SK-N-SH (cell line): ENCODE measurements at regions of chr17 and their contacts with region 1.

Region 1: DNA sequence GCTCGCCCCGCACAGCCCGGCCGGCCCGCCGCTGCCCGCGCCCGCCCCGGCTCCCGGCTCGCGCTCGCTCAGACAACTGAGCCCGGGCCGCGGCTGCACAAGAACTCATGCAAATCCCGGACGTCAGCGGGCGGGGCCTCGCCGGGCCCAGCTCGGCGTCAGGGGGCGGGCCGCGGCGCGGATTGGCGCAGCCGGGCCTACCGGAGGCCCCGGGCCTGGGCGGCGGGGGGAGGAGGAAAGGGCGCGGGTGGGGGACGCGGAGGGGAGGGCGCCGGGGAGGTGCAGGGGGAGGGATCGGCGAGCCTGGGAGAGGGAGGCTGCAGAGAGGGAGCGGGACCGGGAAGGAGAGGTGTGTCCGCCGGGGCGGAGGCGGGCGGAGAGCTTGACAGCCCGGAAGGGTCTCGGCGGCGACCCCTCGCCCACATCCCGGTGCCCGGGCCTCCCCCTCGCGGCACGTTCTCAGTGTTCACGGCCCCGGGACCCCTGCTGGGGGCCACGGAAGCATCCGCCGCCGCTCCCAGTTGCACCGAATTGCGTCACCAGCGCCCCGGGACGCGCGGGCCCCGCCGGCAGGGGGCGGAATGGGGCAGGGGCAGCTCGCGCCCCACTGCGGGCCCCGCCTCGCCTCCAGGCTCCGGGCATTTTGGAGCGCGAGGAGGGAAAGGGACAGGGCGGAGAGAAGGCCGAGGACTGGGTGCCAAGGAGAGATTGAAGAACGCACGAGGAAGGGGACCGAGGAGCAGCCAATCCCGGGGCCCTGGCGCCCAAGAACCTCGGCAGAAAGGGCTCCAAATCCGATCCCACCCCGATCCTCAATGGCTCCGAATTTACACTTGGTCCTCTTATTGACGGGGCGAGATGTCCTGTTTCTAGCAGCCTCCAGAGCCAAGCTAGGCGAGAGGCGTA is at the start of gene CBX4:
- DNase-seq: peak; percentile 99
- H3K4me3 ChIP-seq: peak within 1 kb of the TSS; percentile 54 to 91
- H3K27ac ChIP-seq: peak within 1 kb of the TSS; percentile 74 to 77
- H3K4me1 ChIP-seq: peaks cover 26 to 63% of the 10 kb centered on the region in 2 experiments
- H3K27me3 ChIP-seq: peaks cover 39% of the 10 kb centered on the region
- CTCF ChIP-seq: peak; percentile 86
- EP300 ChIP-seq: no peak
- RAD21 ChIP-seq: no peak
- polyA plus RNA-seq, gene CBX4: 16.6 and 21.9 TPM in 2 replicates

Region 2: GRCh38 chr17:79741751-79742588 is 97.6 kb before region 1 on chr17:
- CTCF ChIA-PET with region 1: interaction called, 174 read pairs
- POLR2A ChIA-PET with region 1: interaction called, 3 read pairs
- DNase-seq: peak; percentile 99
- H3K4me3 ChIP-seq: peak overlapping the region; percentile 50 to 55; a peak in 3 of 4 replicates
- H3K27ac ChIP-seq: peak overlapping the region in 1 of 2 experiments; percentile 29; a peak in 1 of 4 replicates
- H3K4me1 ChIP-seq: peaks cover 0 to 12% of the 10 kb centered on the region in 2 experiments; a peak in 1 of 4 replicates
- H3K27me3 ChIP-seq: peaks cover 42% of the 10 kb centered on the region
- CTCF ChIP-seq: peak; percentile 99
- EP300 ChIP-seq: no peak
- RAD21 ChIP-seq: peak; percentile 75

Region 3: GRCh38 chr17:79796763-79797491 is 42.7 kb before region 1 on chr17 and contains the start of gene CBX8:
- CTCF ChIA-PET with region 1: interaction called, 22 read pairs
- POLR2A ChIA-PET with region 1: interaction called, 9 read pairs
- DNase-seq: peak; percentile 100
- H3K4me3 ChIP-seq: peak within 1 kb of the TSS; percentile 79 to 85
- H3K27ac ChIP-seq: peak within 1 kb of the TSS; percentile 82 to 98; a peak in 3 of 4 replicates
- H3K4me1 ChIP-seq: peaks cover 23 to 43% of the 10 kb centered on the region in 2 experiments; a peak in 3 of 4 replicates
- H3K27me3 ChIP-seq: 0 out of 2 replicates have a peak, but pooled peaks cover 3% of the 10 kb centered on the region
- CTCF ChIP-seq: no peak
- EP300 ChIP-seq: peak; percentile 36 to 63; a peak in 2 of 4 replicates
- RAD21 ChIP-seq: no peak; the same call in 1 of the 2 replicates
- polyA plus RNA-seq, gene CBX8: 2.1 and 2.9 TPM in 2 replicates

Region 4: DNA sequence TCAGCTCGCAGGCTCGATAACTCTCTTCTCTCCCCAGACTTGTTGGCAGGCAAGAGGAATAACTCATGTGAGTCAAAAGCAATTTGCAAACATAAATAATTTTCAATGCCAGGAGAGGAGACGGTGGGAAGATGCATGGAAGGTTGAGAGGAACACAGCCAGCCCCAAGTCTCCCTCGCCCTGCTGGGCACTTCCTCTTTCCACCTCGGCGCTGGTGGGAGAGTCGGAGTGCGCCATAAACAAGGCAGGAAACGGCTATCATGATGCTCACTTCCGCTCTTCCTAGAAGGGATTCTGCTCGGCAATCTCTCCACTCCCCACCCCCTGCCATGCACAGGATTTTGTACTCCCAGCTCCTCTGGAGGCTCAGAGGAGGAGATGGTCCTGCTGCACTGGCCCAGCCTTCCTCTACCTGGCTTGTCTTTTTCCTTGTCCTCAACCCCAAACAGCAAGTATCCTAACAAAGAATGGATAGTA is 13.4 kb before region 1 on chr17:
- CTCF ChIA-PET with region 1: interaction called, 65 read pairs
- POLR2A ChIA-PET with region 1: interaction called, 3 read pairs
- DNase-seq: no peak
- H3K4me3 ChIP-seq: no peak overlapping the region
- H3K27ac ChIP-seq: no peak overlapping the region
- H3K4me1 ChIP-seq: peaks cover 0 to 19% of the 10 kb centered on the region in 2 experiments; a peak in 2 of 4 replicates
- H3K27me3 ChIP-seq: no peaks in the 10 kb centered on the region
- CTCF ChIP-seq: no peak
- EP300 ChIP-seq: no peak
- RAD21 ChIP-seq: no peak

Region 5: DNA sequence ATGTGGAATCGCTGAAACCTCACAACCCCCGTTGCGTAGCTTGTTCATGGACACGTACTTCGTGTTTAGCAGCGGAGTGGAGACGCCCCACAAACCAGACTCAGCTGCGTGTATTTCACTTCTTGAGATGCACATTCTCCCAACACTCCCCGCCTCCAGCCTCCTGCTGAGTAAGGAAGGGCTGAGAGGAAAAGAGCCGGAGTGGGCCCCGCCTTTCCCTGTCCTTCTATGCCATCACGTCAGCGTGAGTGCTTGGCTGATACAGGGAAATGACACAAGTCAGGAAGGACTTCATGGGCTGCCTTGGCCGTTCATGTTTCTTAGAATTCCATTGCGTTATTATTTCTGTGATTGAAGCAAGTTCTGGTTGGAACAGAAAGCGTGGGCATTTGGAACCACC is 68.2 kb after region 1 on chr17:
- CTCF ChIA-PET with region 1: interaction called, 10 read pairs
- POLR2A ChIA-PET with region 1: no interaction called
- DNase-seq: no peak
- H3K4me3 ChIP-seq: no peak overlapping the region
- H3K27ac ChIP-seq: no peak overlapping the region
- H3K4me1 ChIP-seq: no peaks in the 10 kb centered on the region
- H3K27me3 ChIP-seq: peaks cover 16% of the 10 kb centered on the region; the same call in 1 of the 2 replicates
- CTCF ChIP-seq: no peak
- EP300 ChIP-seq: no peak
- RAD21 ChIP-seq: no peak

Region 6: GRCh38 chr17:79930877-79931816 is 91.5 kb after region 1 on chr17:
- CTCF ChIA-PET with region 1: interaction called, 182 read pairs
- POLR2A ChIA-PET with region 1: interaction called, 3 read pairs
- DNase-seq: no peak
- H3K4me3 ChIP-seq: peak overlapping the region; percentile 60 to 70; a peak in 2 of 4 replicates
- H3K27ac ChIP-seq: no peak overlapping the region
- H3K4me1 ChIP-seq: peaks cover 6 to 24% of the 10 kb centered on the region in 2 experiments; a peak in 2 of 4 replicates
- H3K27me3 ChIP-seq: no peaks in the 10 kb centered on the region
- CTCF ChIP-seq: no peak
- EP300 ChIP-seq: no peak
- RAD21 ChIP-seq: no peak

Region 7: DNA sequence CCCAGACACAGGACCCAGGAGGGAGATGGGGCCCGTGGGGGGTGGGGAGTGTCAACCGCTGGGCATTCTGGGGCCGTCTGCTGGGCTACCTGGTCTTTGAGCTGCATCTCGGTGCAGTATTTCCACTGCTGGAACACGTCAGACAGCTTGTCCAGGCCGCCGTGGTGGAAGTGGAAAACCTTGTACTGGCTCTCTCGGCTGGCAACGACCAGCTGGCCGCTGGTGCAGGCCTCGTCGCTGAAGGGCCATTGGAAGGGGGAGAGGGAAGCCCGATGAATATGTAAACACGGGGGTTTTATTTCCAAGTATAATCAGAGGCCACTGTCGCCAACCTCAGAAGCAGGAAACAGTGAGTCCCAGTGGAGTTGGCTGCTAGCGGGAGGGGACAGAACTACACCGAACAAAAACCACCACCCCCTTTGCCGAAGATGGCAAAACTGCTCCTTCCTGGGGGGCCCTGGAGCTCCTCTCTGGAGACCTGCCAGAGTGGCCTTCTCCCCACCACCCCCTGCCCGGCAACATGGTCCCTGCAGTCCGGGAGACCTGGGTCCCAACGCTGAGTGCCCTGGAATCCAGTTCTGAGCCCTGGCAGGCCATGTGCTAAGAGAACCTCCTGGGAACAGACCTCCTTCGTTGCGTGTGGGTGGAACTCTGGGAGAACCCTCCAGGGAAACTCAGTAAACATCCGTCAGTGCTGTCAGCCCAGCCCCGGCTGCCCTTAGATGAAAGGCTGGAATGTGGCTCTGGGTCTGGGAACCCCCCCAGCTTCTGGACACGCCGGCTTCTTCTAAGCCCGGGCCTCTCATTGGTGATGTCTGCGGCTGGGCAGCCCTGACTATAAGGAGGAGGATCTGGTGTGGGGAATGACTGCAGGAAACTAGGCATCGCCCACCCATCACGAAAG is 112.0 kb after region 1 on chr17:
- CTCF ChIA-PET with region 1: no interaction called
- POLR2A ChIA-PET with region 1: no interaction called
- DNase-seq: peak; percentile 48
- H3K4me3 ChIP-seq: no peak overlapping the region
- H3K27ac ChIP-seq: no peak overlapping the region; a peak in 1 of 4 replicates
- H3K4me1 ChIP-seq: peaks cover 3% of the 10 kb centered on the region in 2 experiments; a peak in 2 of 4 replicates
- H3K27me3 ChIP-seq: no peaks in the 10 kb centered on the region
- CTCF ChIP-seq: no peak
- EP300 ChIP-seq: no peak
- RAD21 ChIP-seq: no peak

Region 8: DNA sequence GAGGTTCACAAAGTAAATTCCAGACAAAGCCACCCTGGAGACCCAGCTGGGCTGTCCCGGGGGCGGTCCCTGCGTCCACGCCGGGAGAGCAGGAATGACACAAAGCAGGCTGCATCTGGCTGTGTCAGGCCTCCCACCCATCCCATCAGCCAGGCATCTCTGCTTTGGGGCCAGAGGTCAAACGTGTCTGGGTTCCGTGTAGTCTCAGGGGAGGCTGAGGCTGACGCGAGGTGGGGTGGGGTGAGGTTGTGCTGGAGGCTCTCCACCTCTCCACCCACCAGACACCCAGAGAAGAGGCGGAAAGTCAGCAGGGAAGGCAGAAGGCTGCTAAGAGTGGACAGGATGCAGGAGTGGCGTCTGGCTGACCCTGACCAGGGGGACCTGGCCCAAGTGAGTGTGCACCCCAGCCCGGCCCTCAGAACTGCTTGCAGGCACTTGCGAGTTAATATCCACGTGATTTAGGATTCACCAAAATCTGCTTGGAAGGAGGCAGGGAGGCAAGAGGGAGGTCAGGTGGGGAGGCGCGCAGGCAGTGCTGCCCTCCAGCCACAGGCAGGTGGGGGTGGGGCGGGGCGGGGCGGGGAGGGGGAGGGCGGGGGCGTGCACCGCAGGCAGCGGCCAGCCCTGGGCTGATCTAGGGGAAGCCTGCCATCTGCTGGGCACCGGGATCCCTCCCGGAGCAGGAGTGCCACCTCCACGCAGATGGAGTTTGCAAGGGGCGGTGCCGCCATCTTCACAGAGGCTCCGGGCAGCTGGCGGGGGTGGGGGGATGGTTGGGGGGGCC is 151.7 kb after region 1 on chr17:
- CTCF ChIA-PET with region 1: interaction called, 90 read pairs
- POLR2A ChIA-PET with region 1: no interaction called
- DNase-seq: peak; percentile 100
- H3K4me3 ChIP-seq: no peak overlapping the region
- H3K27ac ChIP-seq: no peak overlapping the region; a peak in 1 of 4 replicates
- H3K4me1 ChIP-seq: peaks cover 21 to 40% of the 10 kb centered on the region in 2 experiments; a peak in 3 of 4 replicates
- H3K27me3 ChIP-seq: no peaks in the 10 kb centered on the region
- CTCF ChIP-seq: peak; percentile 46
- EP300 ChIP-seq: no peak
- RAD21 ChIP-seq: peak; percentile 78